Ascending aorta (tissue), 2 donors: ENCODE measurements at regions of chr22 and their contacts with region 1.

Region 1: GRCh38 chr22:31530823-31531195 is 34.5 kb downstream of the SFI1 start:
- DNase-seq: no peak
- H3K4me3 ChIP-seq: no peak overlapping the region
- H3K27ac ChIP-seq: peak overlapping the region; percentile 37 to 53
- H3K4me1 ChIP-seq: peaks cover 0 to 10% of the 10 kb centered on the region in 2 donors
- H3K27me3 ChIP-seq: no peaks in the 10 kb centered on the region
- CTCF ChIP-seq: no peak

Region 2: DNA sequence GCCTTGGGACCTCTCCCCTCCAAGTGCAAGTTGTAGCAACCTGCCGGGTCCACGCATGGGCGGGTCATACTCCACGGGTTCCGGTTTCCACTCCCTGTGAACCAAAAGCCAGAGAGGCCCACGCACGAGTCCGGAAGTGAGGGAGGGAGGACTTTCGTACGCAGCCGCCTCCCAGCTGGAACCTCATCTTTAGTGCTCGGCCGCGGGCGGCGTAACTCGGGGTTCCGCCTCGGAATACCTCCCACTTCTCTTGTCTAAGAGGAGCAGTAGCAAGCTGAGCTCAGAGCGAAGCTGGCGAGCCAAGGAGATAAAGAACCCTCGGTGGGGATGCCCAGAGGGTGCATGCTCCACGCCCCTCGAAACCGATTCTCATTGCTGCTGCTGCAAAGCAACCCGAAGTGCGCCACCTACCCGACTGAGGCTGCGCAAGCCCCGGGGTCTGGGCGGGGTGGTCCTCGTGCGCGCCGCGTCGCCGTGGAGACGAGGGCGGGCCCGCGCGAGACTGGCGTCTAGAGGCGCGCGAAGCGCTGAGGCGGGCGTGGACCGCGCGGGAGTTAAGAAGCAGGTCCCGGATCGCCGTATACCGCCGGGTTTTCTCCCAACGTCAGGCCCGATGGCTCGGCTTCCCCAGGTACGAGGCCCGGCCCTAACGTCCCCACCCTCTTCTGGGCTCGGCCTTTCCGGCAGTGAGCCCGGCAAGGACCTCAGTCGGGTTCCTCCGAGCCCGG is 34.6 kb before region 1 on chr22 and contains the start of gene SFI1:
- intact Hi-C with region 1: loop called (anchors 5 kb)
- DNase-seq: peak; percentile 56 to 92
- H3K4me3 ChIP-seq: peak within 1 kb of the TSS; percentile 63 to 86
- H3K27ac ChIP-seq: peak within 1 kb of the TSS; percentile 45 to 70
- H3K4me1 ChIP-seq: peaks cover 0 to 8% of the 10 kb centered on the region in 2 donors
- H3K27me3 ChIP-seq: no peaks in the 10 kb centered on the region
- CTCF ChIP-seq: peak in 1 of 3 experiments; percentile 37
- total RNA-seq, gene SFI1: 31.0 TPM

Region 3: GRCh38 chr22:31602259-31602952 is 71.6 kb after region 1 on chr22:
- intact Hi-C with region 1: no loop called
- DNase-seq: no peak
- H3K4me3 ChIP-seq: no peak overlapping the region
- H3K27ac ChIP-seq: peak overlapping the region; percentile 59 to 74
- H3K4me1 ChIP-seq: peaks cover 0 to 4% of the 10 kb centered on the region in 2 donors
- H3K27me3 ChIP-seq: no peaks in the 10 kb centered on the region
- CTCF ChIP-seq: no peak

Region 4: GRCh38 chr22:31646186-31647089 is 115.6 kb after region 1 on chr22:
- intact Hi-C with region 1: no loop called
- DNase-seq: no peak
- H3K4me3 ChIP-seq: no peak overlapping the region
- H3K27ac ChIP-seq: no peak overlapping the region
- H3K4me1 ChIP-seq: no peaks in the 10 kb centered on the region
- H3K27me3 ChIP-seq: no peaks in the 10 kb centered on the region
- CTCF ChIP-seq: no peak

Region 5: GRCh38 chr22:31926969-31927368 is 396.2 kb after region 1 on chr22:
- intact Hi-C with region 1: no loop called
- DNase-seq: no peak
- H3K4me3 ChIP-seq: no peak overlapping the region
- H3K27ac ChIP-seq: no peak overlapping the region
- H3K4me1 ChIP-seq: no peaks in the 10 kb centered on the region
- H3K27me3 ChIP-seq: no peaks in the 10 kb centered on the region
- CTCF ChIP-seq: no peak